HEK293 (cell line): ENCODE measurements at regions of chr6 and their contacts with region 1.

Region 1: GRCh38 chr6:31366693-31367470 is 9.9 kb upstream of the HLA-B start:
- H3K4me3 ChIP-seq: peak overlapping the region; percentile 26
- H3K27ac ChIP-seq: no peak overlapping the region
- H3K4me1 ChIP-seq: no peaks in the 10 kb centered on the region
- CTCF ChIP-seq: peak; percentile 99

Region 2: DNA sequence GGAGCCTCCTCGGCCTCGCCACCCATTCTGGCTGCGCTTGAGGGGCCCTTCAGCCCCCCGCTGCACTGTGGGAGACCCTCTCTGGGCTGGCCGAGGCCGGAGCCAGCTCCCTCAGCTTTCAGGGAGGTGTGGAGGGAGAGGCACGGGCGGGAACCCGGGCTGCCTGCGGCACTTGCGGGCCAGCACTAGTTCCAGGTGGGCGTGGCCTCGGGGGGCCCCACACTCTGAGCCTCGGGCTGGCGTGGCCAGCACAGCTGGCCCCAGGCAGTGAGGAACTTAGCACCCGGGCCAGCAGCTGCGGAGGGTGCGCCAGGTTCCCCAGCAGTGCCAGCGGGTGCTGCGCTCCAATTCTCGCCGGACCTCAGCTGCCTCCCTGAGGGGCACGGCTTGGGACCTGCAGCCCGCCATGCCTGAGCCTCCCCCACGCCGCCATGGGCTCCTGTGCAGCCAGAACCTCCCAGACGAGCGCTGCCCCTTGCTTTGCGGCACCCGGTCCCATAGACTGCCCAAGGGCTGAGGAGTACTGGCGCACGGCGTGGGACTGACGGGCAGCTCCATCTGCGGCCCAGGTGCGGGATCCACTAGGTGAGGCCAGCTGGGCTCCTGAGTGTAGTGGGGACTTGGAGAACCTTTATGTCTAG is 350.1 kb before region 1 on chr6:
- CTCF ChIA-PET with region 1: no interaction called
- POLR2A ChIA-PET with region 1: no interaction called
- H3K4me3 ChIP-seq: no peak overlapping the region
- H3K27ac ChIP-seq: no peak overlapping the region
- H3K4me1 ChIP-seq: no peaks in the 10 kb centered on the region
- CTCF ChIP-seq: no peak

Region 3: DNA sequence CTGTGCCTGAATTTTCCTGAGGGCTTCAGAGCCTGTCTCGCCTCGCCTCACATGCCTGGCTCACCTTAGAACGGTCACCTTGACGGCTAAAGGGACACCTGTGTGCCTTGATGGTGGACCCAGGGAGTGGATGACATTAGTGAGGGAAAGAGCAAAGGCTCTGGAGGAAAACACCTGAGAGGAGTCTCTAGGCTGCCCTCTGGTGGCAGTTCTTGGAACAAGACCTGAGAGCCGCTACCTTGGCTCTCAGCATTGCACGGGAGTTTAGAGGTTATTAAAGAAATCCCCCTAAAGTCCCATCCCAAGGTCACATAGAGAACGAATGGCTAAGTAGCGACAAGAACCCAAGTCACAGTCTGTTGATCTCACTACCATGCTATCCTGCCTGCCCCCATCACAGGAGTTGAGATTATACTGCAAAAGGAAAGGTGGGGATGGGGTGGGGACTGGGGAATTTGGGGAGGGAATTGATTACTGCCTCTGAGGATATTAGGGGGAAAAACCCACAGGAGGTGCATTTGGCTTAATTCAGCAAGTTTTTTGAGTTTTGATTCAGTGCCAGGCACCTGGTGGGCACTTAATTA is 238.7 kb before region 1 on chr6:
- CTCF ChIA-PET with region 1: interaction called, 11 read pairs
- POLR2A ChIA-PET with region 1: no interaction called
- H3K4me3 ChIP-seq: no peak overlapping the region
- H3K27ac ChIP-seq: no peak overlapping the region
- H3K4me1 ChIP-seq: 0 out of 2 replicates have a peak, but pooled peaks cover 3% of the 10 kb centered on the region
- CTCF ChIP-seq: peak; percentile 57; the same call in 1 of the 2 replicates

Region 4: GRCh38 chr6:31197559-31198305 is 169.2 kb before region 1 on chr6:
- CTCF ChIA-PET with region 1: interaction called, 214 read pairs
- POLR2A ChIA-PET with region 1: interaction called, 13 read pairs
- H3K4me3 ChIP-seq: peak overlapping the region; percentile 71
- H3K27ac ChIP-seq: peak overlapping the region; percentile 60
- H3K4me1 ChIP-seq: no peaks in the 10 kb centered on the region; the same call in 1 of the 2 replicates
- CTCF ChIP-seq: no peak

Region 5: DNA sequence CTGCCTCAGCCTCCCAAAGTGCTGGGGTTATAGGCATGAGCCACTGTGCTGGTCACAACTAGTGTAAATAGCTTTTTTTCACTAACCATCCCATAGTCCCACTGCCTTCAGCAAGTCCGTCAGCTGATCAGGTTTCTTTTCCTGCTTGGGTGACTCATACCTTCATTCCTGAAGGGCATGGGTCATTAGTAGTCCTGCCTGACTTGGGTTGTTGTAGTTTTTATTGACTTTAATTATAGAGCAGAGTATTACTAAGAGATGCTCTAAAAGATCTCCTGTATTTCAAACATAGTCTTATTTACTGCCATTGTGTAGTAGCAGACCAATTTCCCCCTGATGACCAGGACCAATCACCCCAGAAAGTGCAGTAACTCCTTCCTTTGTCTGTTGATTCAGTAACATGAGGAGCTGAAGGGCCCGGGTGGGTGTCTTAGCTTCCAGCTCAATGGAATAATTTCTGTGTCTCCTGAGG is 120.8 kb before region 1 on chr6:
- CTCF ChIA-PET with region 1: interaction called, 11 read pairs
- POLR2A ChIA-PET with region 1: no interaction called
- H3K4me3 ChIP-seq: no peak overlapping the region
- H3K27ac ChIP-seq: no peak overlapping the region
- H3K4me1 ChIP-seq: 0 out of 2 replicates have a peak, but pooled peaks cover 3% of the 10 kb centered on the region
- CTCF ChIP-seq: no peak

Region 6: DNA sequence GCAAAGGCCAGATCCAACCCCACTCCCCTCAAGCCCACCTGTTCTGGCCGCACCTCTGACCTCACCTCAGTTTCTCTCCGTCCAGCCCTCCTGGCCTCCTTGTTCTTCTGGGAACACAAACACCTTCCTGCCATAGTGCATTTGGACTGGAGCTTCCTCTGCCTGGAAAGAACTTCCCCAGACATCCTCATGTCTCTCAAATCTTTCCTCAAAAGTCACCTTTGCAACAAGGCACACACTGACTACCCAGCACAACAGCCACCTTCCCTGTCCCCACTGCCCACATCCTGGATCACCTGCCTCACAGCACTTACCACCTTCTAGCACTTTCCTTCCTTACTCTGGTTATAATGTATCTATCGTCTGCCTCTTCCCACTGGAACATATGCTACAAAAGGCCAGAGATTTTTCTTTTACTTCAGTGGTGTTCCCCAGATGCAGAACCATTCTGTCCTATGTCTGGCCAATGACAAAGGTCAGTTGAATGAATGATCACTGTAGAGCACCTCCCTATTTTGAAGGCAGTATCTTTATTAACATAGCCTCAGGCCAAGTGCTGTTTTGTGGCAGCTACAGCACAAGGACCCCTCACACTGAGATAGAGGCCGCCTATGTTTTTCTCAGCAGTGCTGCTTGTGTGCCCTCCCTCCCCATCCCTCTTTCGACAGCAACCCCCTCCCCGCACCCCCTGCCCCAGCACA is 14.0 kb before region 1 on chr6:
- CTCF ChIA-PET with region 1: interaction called, 17 read pairs
- POLR2A ChIA-PET with region 1: interaction called, 9 read pairs
- H3K4me3 ChIP-seq: no peak overlapping the region
- H3K27ac ChIP-seq: no peak overlapping the region
- H3K4me1 ChIP-seq: no peaks in the 10 kb centered on the region
- CTCF ChIP-seq: no peak

Region 7: DNA sequence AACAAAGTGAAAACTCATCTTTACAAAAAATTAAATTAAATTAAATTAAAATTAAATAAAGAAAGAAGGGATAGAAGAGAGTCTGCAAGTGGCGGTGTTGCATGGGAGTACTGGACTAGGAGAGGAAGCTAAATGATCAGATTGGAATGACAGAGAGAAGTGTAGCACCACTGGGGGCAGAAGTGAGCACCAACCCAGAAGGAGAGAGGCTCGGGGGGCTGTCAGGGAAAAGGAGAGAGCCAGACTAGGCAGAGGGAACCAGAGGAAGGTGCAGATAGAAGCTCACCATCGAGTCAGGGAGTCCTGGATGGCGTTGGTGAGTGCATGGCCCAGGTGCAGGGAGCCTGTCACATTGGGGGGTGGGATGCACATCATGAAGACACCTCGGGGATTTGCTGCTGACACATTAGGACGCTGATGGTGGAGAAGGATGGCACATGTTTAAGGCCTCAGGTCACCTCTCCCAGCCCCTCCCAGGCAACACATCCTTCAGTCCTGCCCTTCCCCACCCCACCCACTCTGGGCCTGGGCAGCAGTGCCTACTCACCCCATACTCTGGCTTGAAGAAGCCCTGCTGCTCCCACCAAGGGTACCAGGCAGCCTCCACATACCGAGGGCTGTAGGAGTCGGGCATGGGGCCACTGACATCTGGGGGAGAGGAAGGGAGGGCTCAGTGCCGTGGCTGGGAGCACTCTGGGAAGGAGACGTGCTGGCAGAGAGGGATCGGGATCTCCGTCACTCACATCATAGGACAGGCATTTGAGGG is 424.6 kb after region 1 on chr6:
- CTCF ChIA-PET with region 1: no interaction called
- POLR2A ChIA-PET with region 1: no interaction called
- H3K4me3 ChIP-seq: no peak overlapping the region
- H3K27ac ChIP-seq: no peak overlapping the region
- H3K4me1 ChIP-seq: no peaks in the 10 kb centered on the region; the same call in 1 of the 2 replicates
- CTCF ChIP-seq: peak; percentile 71